ENCODE measurements at regions of chr15 and their contacts with region 1.

Region 1: GRCh38 chr15:62444104-62445022 is 279.3 kb upstream of the C2CD4B start:
- DNase-seq: no peak
- ATAC-seq: peak in 1 of 2 donors; percentile 92

Region 2: GRCh38 chr15:61393949-61394348 is 1050.4 kb before region 1 on chr15:
- intact Hi-C with region 1: no loop called
- DNase-seq: no peak
- ATAC-seq: peak; percentile 39 to 90

Region 3: GRCh38 chr15:62153228-62153627 is 291.1 kb before region 1 on chr15:
- intact Hi-C with region 1: no loop called
- DNase-seq: no peak
- ATAC-seq: no peak

Region 4: DNA sequence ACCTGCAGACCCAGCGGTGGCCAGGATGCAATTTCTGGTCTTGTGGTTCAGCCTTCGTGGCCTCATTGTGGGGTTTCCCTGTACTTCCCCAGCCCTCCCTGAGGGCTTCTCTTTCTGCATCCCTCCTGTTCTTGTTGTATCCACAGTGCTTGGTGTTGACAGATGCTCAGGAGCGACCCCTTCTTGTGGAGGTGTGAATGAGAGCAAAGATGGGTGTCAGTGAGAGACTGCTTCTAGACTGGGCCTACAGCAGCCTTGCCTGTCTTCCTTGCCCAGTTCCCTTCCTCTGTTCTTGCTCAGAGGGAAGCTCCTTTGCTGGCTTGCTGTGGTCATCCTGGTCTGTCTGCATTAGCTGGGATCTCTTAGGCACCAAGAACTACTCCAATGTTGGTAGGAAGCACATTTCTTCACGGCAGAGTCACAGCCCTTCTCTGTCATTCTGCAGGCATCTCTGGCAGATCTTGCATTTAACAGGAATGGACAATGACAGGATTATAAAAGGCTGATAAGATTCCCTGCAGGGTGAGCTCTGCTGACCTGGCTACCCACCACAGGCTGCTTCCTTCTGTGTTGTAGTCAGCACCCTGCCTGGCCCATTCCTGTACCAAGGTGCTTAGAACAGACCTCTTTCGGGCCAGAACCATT is 38.5 kb after region 1 on chr15:
- intact Hi-C with region 1: loop called in 1 of 2 experiments (anchors 5 kb)
- DNase-seq: no peak
- ATAC-seq: peak; percentile 51 to 69

Region 5: DNA sequence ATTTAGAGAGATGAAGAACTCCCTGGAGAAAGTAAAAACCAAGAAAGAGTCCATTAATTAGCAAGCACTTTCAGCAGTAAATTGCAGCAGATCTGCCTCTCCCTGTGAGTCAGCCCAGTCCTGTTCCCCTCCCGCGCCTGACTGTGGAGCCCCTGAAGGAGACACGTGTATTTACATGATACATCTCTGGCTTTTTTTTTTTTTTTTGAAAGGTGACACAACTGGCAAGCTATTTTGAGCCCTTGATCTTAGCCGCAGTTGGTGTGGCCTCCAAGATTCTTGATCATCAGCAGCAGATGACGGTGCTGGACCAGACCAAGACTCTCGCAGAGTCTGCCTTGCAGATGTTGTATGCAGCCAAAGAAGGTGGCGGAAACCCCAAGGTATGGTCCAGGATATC is 326.4 kb after region 1 on chr15:
- intact Hi-C with region 1: no loop called
- DNase-seq: no peak
- ATAC-seq: peak in 1 of 2 donors; percentile 69